ENCODE measurements at regions of chr20 and their contacts with region 1.

Region 1: DNA sequence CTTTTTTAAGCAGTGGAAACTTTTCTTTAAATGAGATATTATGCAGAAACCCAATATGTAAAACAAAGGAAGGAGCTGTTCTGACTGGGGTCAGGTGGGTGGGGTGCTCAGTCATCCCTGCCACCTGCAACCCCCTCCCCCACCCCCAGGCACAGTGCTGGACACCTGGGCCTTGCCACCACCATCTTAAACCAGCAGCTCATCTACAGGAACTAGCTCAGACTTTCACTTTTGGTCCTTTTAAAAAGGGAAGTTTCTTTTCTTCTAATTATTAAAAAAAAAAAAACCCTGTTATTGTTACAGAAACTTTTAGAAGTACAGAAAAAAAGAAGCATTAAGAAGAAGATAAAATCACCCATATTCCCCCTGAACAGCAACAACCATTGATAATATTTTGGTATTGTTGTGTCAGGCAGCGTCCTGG is 37.1 kb downstream of the PPP1R16B start:
- DNase-seq: no peak
- ATAC-seq: no peak
- H3K4me3 ChIP-seq: no peak overlapping the region
- H3K27ac ChIP-seq: no peak overlapping the region
- H3K4me1 ChIP-seq: no peaks in the 10 kb centered on the region
- H3K27me3 ChIP-seq: peaks cover 0 to 3% (median 2%) of the 10 kb centered on the region in 3 donors
- CTCF ChIP-seq: no peak

Region 2: DNA sequence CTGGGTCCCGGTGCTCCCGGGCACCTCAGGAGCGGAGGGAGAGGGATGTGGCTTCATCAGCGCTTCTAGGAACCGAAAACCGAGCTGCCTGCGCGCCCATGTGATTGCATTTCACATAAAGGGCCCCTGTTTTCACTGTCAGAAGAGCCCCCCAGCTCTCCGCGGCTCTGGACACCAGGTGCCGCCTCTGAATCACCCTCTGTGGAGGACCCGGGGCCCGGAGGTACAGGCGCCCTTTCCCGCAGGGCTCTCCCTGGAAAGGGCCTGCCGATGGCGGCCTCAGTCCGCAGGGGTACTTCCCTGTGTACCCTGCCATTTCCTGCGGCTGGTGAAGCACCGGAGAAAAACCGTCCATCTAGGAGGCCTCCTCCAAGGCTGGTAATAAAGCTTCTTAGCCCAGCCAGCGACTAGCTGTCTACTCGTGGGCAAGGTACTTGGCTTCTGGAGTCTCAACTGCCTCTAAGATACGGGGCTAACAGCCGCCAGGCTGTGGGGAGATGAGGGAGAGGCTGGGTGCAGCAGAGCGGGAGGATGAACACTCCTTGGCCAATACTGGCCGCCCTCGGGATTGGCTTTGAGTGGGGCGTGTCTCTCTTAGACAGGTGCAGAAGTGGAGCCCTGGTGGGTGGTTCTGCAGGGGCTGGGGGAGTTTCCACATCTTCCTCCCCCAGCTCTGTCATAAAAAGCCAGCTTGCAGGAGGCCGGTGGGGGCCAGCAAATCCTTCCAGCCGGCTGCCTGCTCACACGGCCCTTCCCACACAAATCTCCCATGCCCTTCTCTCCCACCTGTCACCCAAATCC is 35.5 kb before region 1 on chr20:
- intact Hi-C with region 1: no loop called
- DNase-seq: no peak
- ATAC-seq: no peak
- H3K4me3 ChIP-seq: peak overlapping the region; percentile 69
- H3K27ac ChIP-seq: peak overlapping the region; percentile 1
- H3K4me1 ChIP-seq: peaks cover 4% of the 10 kb centered on the region
- H3K27me3 ChIP-seq: peaks cover 0 to 40% (median 16%) of the 10 kb centered on the region in 3 donors
- CTCF ChIP-seq: no peak

Region 3: DNA sequence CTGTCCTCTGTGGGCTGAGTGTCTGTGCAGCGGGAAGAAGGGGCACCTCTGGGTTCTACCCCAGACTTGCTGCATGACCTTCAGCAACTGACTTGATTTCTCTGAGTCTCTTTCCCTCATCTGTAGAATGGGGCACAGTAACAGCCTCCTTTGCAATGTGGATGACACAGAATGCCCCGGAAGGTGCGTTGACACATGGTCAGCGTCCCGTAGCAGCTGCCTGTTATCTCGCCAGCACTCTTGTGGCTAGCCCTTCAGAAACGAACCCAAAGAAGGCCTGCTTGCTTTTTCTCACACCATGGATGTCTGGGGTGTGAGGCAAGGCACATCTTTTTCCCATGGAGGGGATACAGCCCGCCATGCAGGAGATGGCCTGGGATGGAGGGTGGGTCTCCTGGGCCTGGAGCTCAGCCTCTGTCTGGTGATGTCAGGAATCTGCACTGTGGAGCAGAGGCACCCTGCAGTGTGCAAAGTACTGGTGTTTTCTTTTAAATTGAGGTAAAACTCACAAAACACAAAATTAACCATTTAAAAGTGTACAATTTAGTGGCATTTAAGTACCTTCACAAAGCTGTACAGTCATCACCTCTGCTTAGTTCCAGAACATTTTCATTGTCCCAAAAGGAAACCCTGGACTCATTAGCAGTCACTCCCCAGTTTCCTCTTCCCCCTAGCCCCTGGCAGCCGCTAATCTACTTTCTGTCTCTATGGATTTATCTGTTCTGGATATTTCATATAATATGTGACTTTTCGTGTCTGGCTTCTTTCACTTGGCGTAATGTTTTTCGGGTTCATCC is 23.9 kb after region 1 on chr20:
- intact Hi-C with region 1: loop called in 1 of 2 experiments (anchors 2 kb)
- DNase-seq: no peak
- ATAC-seq: no peak
- H3K4me3 ChIP-seq: no peak overlapping the region
- H3K27ac ChIP-seq: no peak overlapping the region
- H3K4me1 ChIP-seq: no peaks in the 10 kb centered on the region
- H3K27me3 ChIP-seq: peaks cover 0 to 10% (median 2%) of the 10 kb centered on the region in 3 donors
- CTCF ChIP-seq: no peak

Region 4: GRCh38 chr20:38941726-38942389 is 99.3 kb after region 1 on chr20:
- intact Hi-C with region 1: no loop called
- DNase-seq: no peak
- ATAC-seq: no peak
- H3K4me3 ChIP-seq: no peak overlapping the region
- H3K27ac ChIP-seq: no peak overlapping the region
- H3K4me1 ChIP-seq: no peaks in the 10 kb centered on the region
- H3K27me3 ChIP-seq: no peaks in the 10 kb centered on the region
- CTCF ChIP-seq: no peak

Measured in psoas muscle (tissue), 8 donors.